Activated CD4-positive, alpha-beta T cell treated with anti-CD3 and anti-CD28 coated beads for 36 hours (primary cell): ENCODE measurements at regions of chr2 and their contacts with region 1.

Region 1: GRCh38 chr2:3651691-3652648 is 6.0 kb upstream of the ALLC start:
- DNase-seq: peak; percentile 86
- ATAC-seq: peak; percentile 81
- H3K4me3 Mint-ChIP-seq: peak overlapping the region; percentile 72
- H3K27ac Mint-ChIP-seq: peak overlapping the region; percentile 91
- H3K4me1 Mint-ChIP-seq: peaks cover 14% of the 10 kb centered on the region
- H3K27me3 Mint-ChIP-seq: no peaks in the 10 kb centered on the region

Region 2: GRCh38 chr2:1886405-1886992 is 1765.5 kb before region 1 on chr2:
- CTCF ChIA-PET with region 1: no interaction called
- POLR2A ChIA-PET with region 1: no interaction called
- intact Hi-C with region 1: loop called in 1 of 2 experiments (anchors 5 kb)
- DNase-seq: peak; percentile 73
- ATAC-seq: no peak
- H3K4me3 Mint-ChIP-seq: no peak overlapping the region
- H3K27ac Mint-ChIP-seq: no peak overlapping the region
- H3K4me1 Mint-ChIP-seq: no peaks in the 10 kb centered on the region
- H3K27me3 Mint-ChIP-seq: peaks cover 9% of the 10 kb centered on the region

Region 3: DNA sequence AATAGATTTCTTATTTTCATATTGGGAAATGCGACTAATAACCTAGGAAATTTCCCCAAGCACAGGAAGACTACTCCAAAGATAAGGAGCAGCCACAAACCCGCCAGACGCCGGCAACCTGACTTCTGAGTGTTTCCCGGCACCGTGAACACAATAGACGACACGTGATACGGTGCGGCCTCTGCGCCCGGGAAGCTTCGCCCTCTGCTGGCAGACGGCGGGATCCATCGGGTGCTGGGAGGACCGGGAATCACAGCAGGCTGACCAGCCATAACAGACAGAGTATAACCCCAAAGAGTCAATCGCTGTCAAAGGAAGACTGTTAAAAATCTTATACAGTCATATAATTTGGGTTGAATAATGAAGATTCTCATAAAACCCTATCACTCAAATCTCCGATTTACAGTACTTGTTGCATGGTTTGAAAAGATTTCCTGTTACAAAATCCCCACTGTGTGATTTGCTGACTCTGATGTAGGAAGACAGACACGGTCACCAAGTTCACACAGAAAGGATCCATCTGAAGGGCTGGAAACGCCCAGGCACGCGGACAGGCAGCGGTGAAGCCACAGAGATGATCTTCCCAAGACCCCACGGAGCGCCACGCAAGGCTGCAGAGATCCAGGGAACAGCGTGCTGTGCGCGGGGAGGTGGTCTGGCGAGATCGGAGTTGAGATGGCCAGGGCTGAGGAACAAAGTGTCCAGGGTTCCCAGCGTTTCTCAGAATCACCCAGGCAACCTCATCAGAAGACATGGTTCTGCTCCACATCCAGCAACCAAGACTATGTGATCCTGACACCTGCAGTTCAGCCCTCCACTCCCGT is 348.2 kb before region 1 on chr2:
- CTCF ChIA-PET with region 1: no interaction called
- POLR2A ChIA-PET with region 1: no interaction called
- intact Hi-C with region 1: loop called in 1 of 2 experiments (anchors 1 kb)
- DNase-seq: peak; percentile 90
- ATAC-seq: peak; percentile 100
- H3K4me3 Mint-ChIP-seq: no peak overlapping the region
- H3K27ac Mint-ChIP-seq: peak overlapping the region; percentile 64
- H3K4me1 Mint-ChIP-seq: peaks cover 8% of the 10 kb centered on the region
- H3K27me3 Mint-ChIP-seq: no peaks in the 10 kb centered on the region

Region 4: GRCh38 chr2:3423492-3424175 is 228.3 kb before region 1 on chr2:
- CTCF ChIA-PET with region 1: interaction called, 18 read pairs
- POLR2A ChIA-PET with region 1: no interaction called
- intact Hi-C with region 1: loop called (anchors 1 kb)
- DNase-seq: peak; percentile 86
- ATAC-seq: peak; percentile 80
- H3K4me3 Mint-ChIP-seq: no peak overlapping the region
- H3K27ac Mint-ChIP-seq: no peak overlapping the region
- H3K4me1 Mint-ChIP-seq: peaks cover 3% of the 10 kb centered on the region
- H3K27me3 Mint-ChIP-seq: no peaks in the 10 kb centered on the region

Region 5: GRCh38 chr2:3518496-3519254 is 133.3 kb before region 1 on chr2:
- CTCF ChIA-PET with region 1: interaction called, 3 read pairs
- POLR2A ChIA-PET with region 1: interaction called, 5 read pairs
- intact Hi-C with region 1: loop called (anchors 1 to 2 kb)
- DNase-seq: peak; percentile 99
- ATAC-seq: peak; percentile 83
- H3K4me3 Mint-ChIP-seq: peak overlapping the region; percentile 84
- H3K27ac Mint-ChIP-seq: peak overlapping the region; percentile 83
- H3K4me1 Mint-ChIP-seq: peaks cover 38% of the 10 kb centered on the region
- H3K27me3 Mint-ChIP-seq: no peaks in the 10 kb centered on the region

Region 6: DNA sequence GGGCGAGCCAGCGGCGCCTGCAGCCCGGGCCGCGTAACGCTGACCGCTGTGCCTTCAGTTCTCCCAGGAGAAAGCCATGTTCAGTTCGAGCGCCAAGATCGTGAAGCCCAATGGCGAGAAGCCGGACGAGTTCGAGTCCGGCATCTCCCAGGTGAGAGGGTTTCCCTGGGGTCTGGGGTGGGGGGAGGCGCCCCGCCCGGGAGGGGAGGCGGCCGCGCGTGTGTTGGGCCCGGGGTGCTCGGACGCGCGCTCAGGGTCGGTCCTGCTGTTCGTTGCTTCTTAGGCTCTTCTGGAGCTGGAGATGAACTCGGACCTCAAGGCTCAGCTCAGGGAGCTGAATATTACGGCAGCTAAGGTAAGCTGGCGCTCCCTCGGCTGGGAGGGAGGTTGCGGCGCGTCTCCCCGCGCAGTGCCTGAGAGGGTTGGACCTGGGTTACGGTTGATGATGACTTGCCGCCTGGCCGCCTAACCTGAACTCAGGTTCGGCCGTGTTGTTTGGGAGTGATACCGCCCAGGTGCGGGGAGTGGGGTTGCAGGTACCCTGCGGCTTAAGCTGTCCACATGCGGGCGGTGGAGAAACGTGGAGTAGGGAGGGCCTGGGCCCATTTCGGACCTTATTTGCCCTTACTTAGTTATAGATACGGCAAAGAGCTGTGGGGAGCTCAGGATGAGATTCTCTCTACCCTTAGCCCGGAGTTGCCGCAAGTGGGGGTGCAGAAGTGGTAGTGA is 76.3 kb before region 1 on chr2:
- CTCF ChIA-PET with region 1: interaction called, 5 read pairs
- POLR2A ChIA-PET with region 1: interaction called, 6 read pairs
- intact Hi-C with region 1: loop called (anchors 1 to 5 kb)
- DNase-seq: peak; percentile 45
- ATAC-seq: peak; percentile 8
- H3K4me3 Mint-ChIP-seq: peak overlapping the region; percentile 94
- H3K27ac Mint-ChIP-seq: peak overlapping the region; percentile 92
- H3K4me1 Mint-ChIP-seq: peaks cover 47% of the 10 kb centered on the region
- H3K27me3 Mint-ChIP-seq: no peaks in the 10 kb centered on the region